Naive thymus-derived CD4-positive, alpha-beta T cell (primary cell): ENCODE measurements at regions of chr12 and their contacts with region 1.

Region 1: GRCh38 chr12:49740930-49741881 is at the start of gene TMBIM6:
- DNase-seq: peak; percentile 92 to 100 (median 99)
- ATAC-seq: peak; percentile 92
- H3K4me3 ChIP-seq: peak within 1 kb of the TSS; percentile 80
- H3K4me3 Mint-ChIP-seq: peak within 1 kb of the TSS; percentile 91 to 98 (median 94)
- H3K27ac ChIP-seq: peak within 1 kb of the TSS; percentile 96
- H3K27ac Mint-ChIP-seq: peak within 1 kb of the TSS; percentile 96 to 99 (median 98)
- H3K4me1 ChIP-seq: peaks cover 27 to 37% of the 10 kb centered on the region in 2 donors
- H3K4me1 Mint-ChIP-seq: peaks cover 25 to 49% (median 36%) of the 10 kb centered on the region in 7 donors
- H3K27me3 ChIP-seq: no peaks in the 10 kb centered on the region
- H3K27me3 Mint-ChIP-seq: peaks cover 0 to 6% (median 0%) of the 10 kb centered on the region in 5 donors
- total RNA-seq, gene TMBIM6: 307 to 432 (median 381) TPM

Region 2: GRCh38 chr12:49130151-49131050 is 610.8 kb before region 1 on chr12:
- CTCF ChIA-PET with region 1: no interaction called
- POLR2A ChIA-PET with region 1: interaction called, 13 read pairs
- intact Hi-C with region 1: loop called in 1 of 2 experiments (anchors 5 kb)
- DNase-seq: peak; percentile 87 to 95 (median 94)
- ATAC-seq: peak; percentile 77
- H3K4me3 ChIP-seq: peak overlapping the region; percentile 92
- H3K4me3 Mint-ChIP-seq: peak overlapping the region; percentile 95 to 99 (median 98)
- H3K27ac ChIP-seq: peak overlapping the region; percentile 95
- H3K27ac Mint-ChIP-seq: peak overlapping the region; percentile 97 to 99 (median 99)
- H3K4me1 ChIP-seq: peaks cover 24 to 27% of the 10 kb centered on the region in 2 donors
- H3K4me1 Mint-ChIP-seq: peaks cover 24 to 61% (median 55%) of the 10 kb centered on the region in 7 donors
- H3K27me3 ChIP-seq: no peaks in the 10 kb centered on the region
- H3K27me3 Mint-ChIP-seq: peaks cover 0 to 7% (median 0%) of the 10 kb centered on the region in 5 donors

Region 3: GRCh38 chr12:49567611-49568441 is 173.4 kb before region 1 on chr12 and contains the start of gene MCRS1:
- CTCF ChIA-PET with region 1: no interaction called
- POLR2A ChIA-PET with region 1: interaction called, 7 read pairs
- intact Hi-C with region 1: loop called (anchors 1 to 2 kb)
- DNase-seq: peak; percentile 89 to 94 (median 91)
- ATAC-seq: peak; percentile 92
- H3K4me3 ChIP-seq: peak within 1 kb of the TSS; percentile 81
- H3K4me3 Mint-ChIP-seq: peak within 1 kb of the TSS; percentile 94 to 100 (median 99)
- H3K27ac ChIP-seq: peak within 1 kb of the TSS; percentile 91
- H3K27ac Mint-ChIP-seq: peak within 1 kb of the TSS; percentile 98 to 100 (median 99)
- H3K4me1 ChIP-seq: peaks cover 33 to 42% of the 10 kb centered on the region in 2 donors
- H3K4me1 Mint-ChIP-seq: peaks cover 45 to 76% (median 61%) of the 10 kb centered on the region in 7 donors
- H3K27me3 ChIP-seq: no peaks in the 10 kb centered on the region
- H3K27me3 Mint-ChIP-seq: peaks cover 0 to 3% (median 0%) of the 10 kb centered on the region in 5 donors
- total RNA-seq, gene MCRS1: 70.0 to 85.2 (median 71.4) TPM

Region 4: DNA sequence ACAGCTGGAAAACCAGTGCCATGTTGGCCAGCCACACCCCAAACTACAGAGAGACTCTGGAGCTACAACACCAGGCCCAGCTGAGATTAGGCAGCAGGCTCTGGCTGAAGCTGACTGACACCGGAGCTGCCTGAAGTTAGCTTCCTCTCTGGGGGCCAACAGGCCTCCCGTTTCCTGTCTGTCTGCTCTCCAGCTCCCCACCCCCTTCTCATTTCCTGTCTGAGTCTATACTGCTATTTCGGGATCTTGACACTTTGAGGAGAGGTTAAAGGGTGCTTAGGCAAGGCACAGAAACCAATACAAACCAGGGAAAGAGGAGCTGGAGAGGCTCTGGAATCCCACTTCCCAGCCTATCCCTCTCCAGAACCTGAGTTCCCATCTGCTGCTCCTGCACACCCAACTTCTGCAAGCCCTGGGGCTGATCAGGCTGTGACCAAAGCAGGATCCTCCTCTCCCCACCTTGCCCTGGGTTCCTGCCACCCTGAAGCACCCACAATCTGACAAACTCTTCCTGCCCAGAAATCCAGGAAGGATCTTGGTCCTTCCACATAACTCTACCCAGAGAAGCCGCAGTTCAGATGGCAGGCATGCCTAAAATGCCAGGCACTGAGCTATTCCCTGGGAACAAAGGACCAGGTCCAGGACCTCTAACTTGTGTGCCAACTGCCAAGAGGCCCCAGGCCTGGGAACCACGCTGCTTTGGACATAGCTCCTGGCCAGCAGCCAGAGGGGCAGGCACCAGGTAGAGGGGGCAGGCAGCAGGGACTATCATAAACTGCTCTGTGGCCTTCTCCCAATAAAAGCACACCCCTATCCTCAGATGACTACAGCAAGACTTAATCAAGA is 78.0 kb before region 1 on chr12:
- CTCF ChIA-PET with region 1: interaction called, 6 read pairs
- POLR2A ChIA-PET with region 1: interaction called, 10 read pairs
- intact Hi-C with region 1: loop called in 1 of 2 experiments (anchors 2 kb)
- DNase-seq: peak; percentile 31 to 93 (median 85)
- ATAC-seq: peak; percentile 97
- H3K4me3 ChIP-seq: peak overlapping the region; percentile 56
- H3K4me3 Mint-ChIP-seq: peak overlapping the region; percentile 81 to 94 (median 86)
- H3K27ac ChIP-seq: peak overlapping the region; percentile 77
- H3K27ac Mint-ChIP-seq: peak overlapping the region; percentile 92 to 100 (median 98)
- H3K4me1 ChIP-seq: peaks cover 44 to 76% of the 10 kb centered on the region in 2 donors
- H3K4me1 Mint-ChIP-seq: peaks cover 59 to 96% (median 91%) of the 10 kb centered on the region in 7 donors
- H3K27me3 ChIP-seq: no peaks in the 10 kb centered on the region
- H3K27me3 Mint-ChIP-seq: no peaks in the 10 kb centered on the region

Region 5: GRCh38 chr12:49776413-49776812 is 35.2 kb after region 1 on chr12:
- CTCF ChIA-PET with region 1: interaction called, 28 read pairs
- POLR2A ChIA-PET with region 1: interaction called, 19 read pairs
- intact Hi-C with region 1: loop called (anchors 1 kb)
- DNase-seq: peak in 8 of 9 donors; percentile 21 to 52 (median 36)
- ATAC-seq: peak; percentile 85
- H3K4me3 ChIP-seq: no peak overlapping the region
- H3K4me3 Mint-ChIP-seq: peak overlapping the region in 2 of 10 donors; percentile 12 to 27
- H3K27ac ChIP-seq: no peak overlapping the region
- H3K27ac Mint-ChIP-seq: peak overlapping the region in 2 of 9 donors; percentile 25 to 56
- H3K4me1 ChIP-seq: peaks cover 0 to 8% of the 10 kb centered on the region in 2 donors
- H3K4me1 Mint-ChIP-seq: peaks cover 10 to 17% (median 13%) of the 10 kb centered on the region in 7 donors
- H3K27me3 ChIP-seq: peaks cover 0 to 8% of the 10 kb centered on the region in 2 donors
- H3K27me3 Mint-ChIP-seq: peaks cover 6 to 27% (median 20%) of the 10 kb centered on the region in 5 donors

Region 6: DNA sequence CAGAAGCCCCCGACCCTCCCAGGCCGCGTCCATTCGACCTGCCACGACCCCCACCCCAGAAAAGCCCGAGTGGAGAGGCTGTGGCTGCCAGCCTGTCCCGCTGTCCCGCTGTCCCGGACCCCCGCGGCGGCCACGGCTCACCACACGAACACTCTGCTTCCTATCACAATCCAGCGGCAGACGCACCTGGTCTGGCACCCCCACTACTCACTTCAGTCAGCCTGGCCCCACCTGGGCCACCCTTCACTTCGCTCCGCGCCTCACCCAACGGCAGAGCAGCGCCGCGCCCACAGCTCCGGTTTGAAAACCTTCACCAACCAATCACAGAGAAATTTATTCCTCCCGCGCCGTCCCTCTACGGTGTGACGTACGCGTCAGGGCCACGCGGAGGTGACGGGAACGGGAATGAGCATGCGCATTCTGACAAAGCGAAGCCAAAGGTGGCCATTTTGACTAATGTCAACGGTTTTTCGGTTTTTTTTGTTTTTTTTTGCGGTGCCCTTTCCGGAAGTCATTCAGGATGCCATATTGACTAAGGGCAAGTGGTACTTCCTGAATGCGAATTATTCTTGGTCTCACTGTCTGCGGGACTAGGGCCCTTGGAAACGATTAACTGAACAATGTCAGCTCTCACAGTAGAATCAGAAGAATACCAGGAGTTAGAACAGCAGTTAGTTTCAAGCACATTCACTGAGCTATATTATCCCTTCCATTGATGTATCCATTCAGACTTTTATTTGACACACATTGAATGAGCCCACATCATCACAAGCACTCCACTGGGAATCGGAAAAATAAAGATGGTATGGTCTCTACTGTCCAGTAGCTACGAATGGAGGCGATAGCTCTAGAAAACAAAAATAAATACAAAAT is 284.2 kb after region 1 on chr12 and contains the start of gene RACGAP1:
- CTCF ChIA-PET with region 1: no interaction called
- POLR2A ChIA-PET with region 1: no interaction called
- intact Hi-C with region 1: loop called (anchors 1 to 10 kb)
- DNase-seq: peak; percentile 77 to 98 (median 97)
- ATAC-seq: peak; percentile 99
- H3K4me3 ChIP-seq: peak within 1 kb of the TSS; percentile 81
- H3K4me3 Mint-ChIP-seq: peak within 1 kb of the TSS; percentile 90 to 99 (median 96)
- H3K27ac ChIP-seq: peak within 1 kb of the TSS; percentile 73
- H3K27ac Mint-ChIP-seq: peak within 1 kb of the TSS; percentile 38 to 97 (median 90)
- H3K4me1 ChIP-seq: peaks cover 0 to 12% of the 10 kb centered on the region in 2 donors
- H3K4me1 Mint-ChIP-seq: peaks cover 10 to 43% (median 18%) of the 10 kb centered on the region in 7 donors
- H3K27me3 ChIP-seq: no peaks in the 10 kb centered on the region
- H3K27me3 Mint-ChIP-seq: peaks cover 0 to 3% (median 0%) of the 10 kb centered on the region in 5 donors
- total RNA-seq, gene RACGAP1: 4.2 to 111 (median 8.0) TPM

Region 7: GRCh38 chr12:51047655-51048540 is 1306.7 kb after region 1 on chr12 and contains the start of gene LETMD1:
- CTCF ChIA-PET with region 1: no interaction called
- POLR2A ChIA-PET with region 1: no interaction called
- intact Hi-C with region 1: loop called in 1 of 2 experiments (anchors 1 kb)
- DNase-seq: peak; percentile 81 to 96 (median 95)
- ATAC-seq: peak; percentile 97
- H3K4me3 ChIP-seq: peak within 1 kb of the TSS; percentile 75
- H3K4me3 Mint-ChIP-seq: peak within 1 kb of the TSS; percentile 93 to 98 (median 96)
- H3K27ac ChIP-seq: peak within 1 kb of the TSS; percentile 81
- H3K27ac Mint-ChIP-seq: peak within 1 kb of the TSS; percentile 93 to 99 (median 96)
- H3K4me1 ChIP-seq: peaks cover 20 to 23% of the 10 kb centered on the region in 2 donors
- H3K4me1 Mint-ChIP-seq: peaks cover 15 to 44% (median 36%) of the 10 kb centered on the region in 7 donors
- H3K27me3 ChIP-seq: no peaks in the 10 kb centered on the region
- H3K27me3 Mint-ChIP-seq: no peaks in the 10 kb centered on the region
- total RNA-seq, gene LETMD1: 58.8 to 101 (median 77.0) TPM